ENCODE measurements at regions of chr7 and their contacts with region 1.

Region 1: GRCh38 chr7:90455163-90456030 is 14.0 kb upstream of the PTTG1IP2 start:
- DNase-seq: peak; percentile 24
- H3K4me3 ChIP-seq: no peak overlapping the region
- H3K27ac ChIP-seq: no peak overlapping the region
- H3K4me1 ChIP-seq: no peaks in the 10 kb centered on the region
- H3K27me3 ChIP-seq: no peaks in the 10 kb centered on the region
- CTCF ChIP-seq: peak in 3 of 4 experiments; percentile 59 to 84 (median 72)
- POLR2A ChIP-seq: no peak

Region 2: DNA sequence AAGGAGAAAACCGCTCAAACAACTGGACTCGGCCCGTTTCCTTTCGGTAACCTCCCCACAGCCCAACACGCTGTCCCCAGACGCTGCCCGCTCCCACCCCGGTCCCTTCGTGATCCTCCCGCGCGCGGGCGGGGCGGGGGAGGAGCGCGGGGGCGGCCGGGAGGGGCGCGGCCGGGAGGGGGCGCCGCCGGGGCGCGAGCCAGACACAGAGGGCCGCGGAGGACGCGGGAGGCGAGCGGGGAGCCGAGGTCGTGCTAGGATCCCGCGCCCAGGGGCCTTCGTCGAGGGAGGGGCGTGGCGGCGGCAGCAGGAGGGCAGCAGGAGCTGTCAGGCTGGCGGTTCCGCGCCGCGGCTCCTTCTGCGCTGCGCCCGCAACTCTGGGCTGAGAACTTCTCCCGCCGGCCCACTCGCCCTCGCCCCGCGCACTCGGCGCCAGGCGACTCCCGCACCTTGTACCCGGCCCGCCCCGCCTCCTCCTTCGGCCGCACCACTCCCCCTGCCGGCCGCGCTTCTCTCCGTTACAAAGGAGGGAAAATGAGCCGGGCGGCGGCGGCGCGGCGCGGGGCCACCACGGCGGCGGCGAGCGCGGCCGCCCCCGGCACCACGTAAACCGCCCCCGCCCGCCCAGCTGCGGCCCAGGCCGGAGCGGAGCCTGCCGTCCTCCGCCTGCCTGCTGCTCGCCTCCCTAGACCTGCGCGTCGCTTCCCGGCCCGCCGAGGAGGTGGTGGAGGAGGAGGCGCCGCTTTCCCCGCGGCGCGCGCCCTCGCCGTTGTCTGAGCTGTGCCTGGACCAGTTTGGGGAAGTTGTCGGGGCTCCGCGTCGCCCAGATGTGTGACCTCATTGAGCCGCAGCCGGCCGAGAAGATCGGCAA is 140.6 kb after region 1 on chr7 and contains the start of gene CDK14:
- intact Hi-C with region 1: loop called (anchors 10 kb)
- DNase-seq: peak; percentile 69
- H3K4me3 ChIP-seq: peak within 1 kb of the TSS; percentile 63 to 79
- H3K27ac ChIP-seq: peak within 1 kb of the TSS; percentile 84
- H3K4me1 ChIP-seq: no peaks in the 10 kb centered on the region
- H3K27me3 ChIP-seq: no peaks in the 10 kb centered on the region
- CTCF ChIP-seq: peak; percentile 23 to 65 (median 54)
- POLR2A ChIP-seq: peak; percentile 40
- total RNA-seq, gene CDK14: 13.7 to 20.7 TPM

Region 3: GRCh38 chr7:90629297-90629918 is 174.0 kb after region 1 on chr7:
- intact Hi-C with region 1: loop called (anchors 10 kb)
- DNase-seq: peak; percentile 34
- H3K4me3 ChIP-seq: no peak overlapping the region
- H3K27ac ChIP-seq: no peak overlapping the region
- H3K4me1 ChIP-seq: no peaks in the 10 kb centered on the region
- H3K27me3 ChIP-seq: no peaks in the 10 kb centered on the region
- CTCF ChIP-seq: peak in 3 of 4 experiments; percentile 47 to 62 (median 50)
- POLR2A ChIP-seq: no peak

Measured in prostate gland (tissue), 2 donors.